ENCODE measurements at regions of chr11 and their contacts with region 1.

Region 1: GRCh38 chr11:119481021-119481666 is 58.2 kb upstream of the THY1 start:
- DNase-seq: peak; percentile 92
- H3K4me3 Mint-ChIP-seq: no peak overlapping the region
- H3K27ac Mint-ChIP-seq: no peak overlapping the region
- H3K4me1 Mint-ChIP-seq: no peaks in the 10 kb centered on the region
- H3K27me3 Mint-ChIP-seq: peaks cover 2% of the 10 kb centered on the region

Region 2: DNA sequence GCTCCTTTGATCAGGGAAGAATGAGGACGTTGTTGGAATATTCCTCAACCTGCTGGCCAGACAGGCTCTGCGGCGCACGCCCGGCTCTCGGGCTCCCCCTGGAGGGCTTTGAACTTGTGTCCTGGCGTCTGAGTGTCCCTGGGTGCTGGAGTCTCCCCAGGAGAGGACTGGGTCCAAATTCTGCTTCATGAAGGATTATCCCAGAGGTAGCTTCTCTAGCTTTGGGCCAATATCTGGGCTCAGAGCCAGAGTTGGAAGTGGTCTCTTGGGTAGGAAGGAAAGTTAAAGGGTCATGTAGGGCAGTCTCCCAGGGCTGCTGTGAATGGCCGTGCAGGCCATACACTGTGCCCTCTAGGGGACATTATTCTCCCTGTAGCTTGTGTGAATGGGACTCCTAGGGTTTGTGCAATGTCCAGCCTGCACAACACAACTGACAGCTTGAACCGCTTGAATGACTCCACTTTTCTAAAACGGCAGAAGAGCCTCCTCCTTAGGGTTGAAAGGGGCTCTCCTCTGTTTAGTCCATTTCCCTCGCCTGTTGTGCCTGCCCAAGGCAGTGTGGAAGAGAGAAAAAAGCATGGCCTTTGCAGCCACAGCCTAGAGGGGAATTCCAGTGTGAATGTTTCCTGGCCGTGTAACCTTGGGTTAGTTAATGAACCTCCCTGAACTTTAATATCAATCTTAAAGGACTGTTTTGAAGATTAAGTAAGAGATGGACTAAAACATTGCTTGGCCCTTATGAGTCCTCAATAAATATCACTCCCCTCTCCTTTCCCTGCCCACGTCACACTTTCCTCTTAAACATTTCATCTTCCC is 53.0 kb after region 1 on chr11:
- intact Hi-C with region 1: loop called (anchors 1 kb)
- DNase-seq: peak; percentile 85
- H3K4me3 Mint-ChIP-seq: no peak overlapping the region
- H3K27ac Mint-ChIP-seq: no peak overlapping the region
- H3K4me1 Mint-ChIP-seq: peaks cover 2% of the 10 kb centered on the region
- H3K27me3 Mint-ChIP-seq: peaks cover 4% of the 10 kb centered on the region

Region 3: GRCh38 chr11:119728651-119729580 is 247.8 kb after region 1 on chr11 and contains the start of gene NECTIN1:
- intact Hi-C with region 1: loop called (anchors 5 kb)
- DNase-seq: peak; percentile 96
- H3K4me3 Mint-ChIP-seq: peak within 1 kb of the TSS; percentile 85
- H3K27ac Mint-ChIP-seq: peak within 1 kb of the TSS; percentile 58
- H3K4me1 Mint-ChIP-seq: peaks cover 15% of the 10 kb centered on the region
- H3K27me3 Mint-ChIP-seq: peaks cover 73% of the 10 kb centered on the region
- total RNA-seq, gene NECTIN1: 3.1 and 5.7 TPM in 2 replicates

Region 4: DNA sequence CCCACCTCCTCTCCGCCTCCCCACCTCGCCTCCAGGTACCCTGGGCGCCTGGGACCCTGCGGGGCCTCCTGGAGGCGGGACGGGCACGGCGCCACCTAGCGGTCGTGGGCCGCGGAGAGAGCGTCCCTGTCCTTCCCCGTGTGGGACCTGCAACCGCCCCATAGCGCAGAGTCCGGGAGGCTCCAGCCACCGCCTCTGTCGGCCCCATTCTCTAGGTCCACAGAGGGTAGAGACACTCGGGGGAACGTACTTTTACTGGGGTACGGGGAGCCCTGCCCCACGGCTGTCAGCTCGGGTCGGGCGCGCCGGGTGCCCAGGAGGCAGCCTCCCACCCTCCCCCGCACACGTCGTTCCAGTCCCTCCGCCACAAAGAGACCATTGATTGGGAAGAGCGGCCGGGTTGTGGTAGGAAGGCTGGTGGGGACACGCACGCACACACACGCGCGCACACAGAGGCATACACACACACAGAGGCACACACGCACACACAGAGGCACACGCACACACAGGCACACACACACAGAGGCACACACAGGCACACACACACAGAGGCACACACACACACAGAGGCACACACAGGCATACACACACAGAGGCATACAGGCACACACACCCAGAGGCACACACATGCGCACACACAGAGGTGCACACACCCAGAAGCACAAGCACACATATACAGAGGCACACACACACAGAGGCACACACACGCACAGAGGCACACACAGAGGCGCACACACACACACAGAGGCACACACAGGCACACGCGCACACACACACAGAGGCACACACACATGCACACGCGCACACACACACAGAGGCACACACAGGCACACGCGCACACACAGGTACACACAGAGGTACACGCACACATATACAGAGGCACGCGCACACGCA is 260.5 kb after region 1 on chr11:
- intact Hi-C with region 1: loop called (anchors 5 kb)
- DNase-seq: peak; percentile 87
- H3K4me3 Mint-ChIP-seq: no peak overlapping the region
- H3K27ac Mint-ChIP-seq: no peak overlapping the region
- H3K4me1 Mint-ChIP-seq: peaks cover 5% of the 10 kb centered on the region
- H3K27me3 Mint-ChIP-seq: peaks cover 46% of the 10 kb centered on the region

Region 5: GRCh38 chr11:120108154-120108865 is 627.2 kb after region 1 on chr11:
- intact Hi-C with region 1: loop called (anchors 5 kb)
- DNase-seq: peak; percentile 88
- H3K4me3 Mint-ChIP-seq: no peak overlapping the region
- H3K27ac Mint-ChIP-seq: no peak overlapping the region
- H3K4me1 Mint-ChIP-seq: no peaks in the 10 kb centered on the region
- H3K27me3 Mint-ChIP-seq: no peaks in the 10 kb centered on the region

Measured in activated CD4-positive, alpha-beta T cell treated with anti-CD3 and anti-CD28 coated beads, Interleukin-2, amount 10 ng/mL, durations not matched to agents 24 days and 14 days (primary cell).